CD8-positive, alpha-beta T cell (primary cell): ENCODE measurements at regions of chr15 and their contacts with region 1.

Region 1: DNA sequence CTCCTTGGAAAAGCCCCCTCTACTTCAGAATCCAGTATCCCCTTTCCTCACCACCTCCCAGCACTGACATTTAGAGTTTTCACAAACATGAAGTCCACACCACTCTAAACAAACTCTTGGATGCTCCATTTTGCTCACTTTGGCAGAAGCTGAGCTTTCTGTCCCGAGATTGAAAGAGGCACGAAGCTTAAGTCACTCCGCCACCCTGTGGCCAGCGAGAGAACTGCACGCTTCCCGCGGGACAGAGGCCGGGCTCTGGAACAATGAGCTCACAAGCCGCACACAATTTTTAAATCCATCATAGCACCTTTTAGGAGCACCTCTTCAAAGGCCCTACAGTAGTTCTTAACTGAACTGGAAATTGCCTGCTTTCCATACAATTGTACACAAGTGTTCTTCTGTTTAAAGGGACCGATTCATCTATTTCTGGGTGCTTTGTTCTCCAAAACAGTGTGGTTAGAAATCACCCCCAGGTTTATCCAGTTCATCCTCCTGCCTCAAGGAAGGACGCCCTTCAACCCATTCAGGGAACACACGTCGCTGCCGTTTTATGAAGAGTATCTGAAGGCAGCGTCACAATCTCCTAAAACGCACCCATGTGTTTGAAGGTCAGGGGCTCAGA is 226.1 kb downstream of the VPS13C start:
- DNase-seq: peak; percentile 39 to 78 (median 71)
- ATAC-seq: peak; percentile 85
- H3K4me3 ChIP-seq: no peak overlapping the region
- H3K4me3 Mint-ChIP-seq: no peak overlapping the region
- H3K27ac ChIP-seq: no peak overlapping the region
- H3K27ac Mint-ChIP-seq: no peak overlapping the region
- H3K4me1 ChIP-seq: no peaks in the 10 kb centered on the region
- H3K4me1 Mint-ChIP-seq: peaks cover 8% of the 10 kb centered on the region
- H3K27me3 ChIP-seq: peaks cover 0 to 4% of the 10 kb centered on the region in 2 experiments
- H3K27me3 Mint-ChIP-seq: peaks cover 22% of the 10 kb centered on the region
- CTCF ChIP-seq: peak; percentile 90

Region 2: DNA sequence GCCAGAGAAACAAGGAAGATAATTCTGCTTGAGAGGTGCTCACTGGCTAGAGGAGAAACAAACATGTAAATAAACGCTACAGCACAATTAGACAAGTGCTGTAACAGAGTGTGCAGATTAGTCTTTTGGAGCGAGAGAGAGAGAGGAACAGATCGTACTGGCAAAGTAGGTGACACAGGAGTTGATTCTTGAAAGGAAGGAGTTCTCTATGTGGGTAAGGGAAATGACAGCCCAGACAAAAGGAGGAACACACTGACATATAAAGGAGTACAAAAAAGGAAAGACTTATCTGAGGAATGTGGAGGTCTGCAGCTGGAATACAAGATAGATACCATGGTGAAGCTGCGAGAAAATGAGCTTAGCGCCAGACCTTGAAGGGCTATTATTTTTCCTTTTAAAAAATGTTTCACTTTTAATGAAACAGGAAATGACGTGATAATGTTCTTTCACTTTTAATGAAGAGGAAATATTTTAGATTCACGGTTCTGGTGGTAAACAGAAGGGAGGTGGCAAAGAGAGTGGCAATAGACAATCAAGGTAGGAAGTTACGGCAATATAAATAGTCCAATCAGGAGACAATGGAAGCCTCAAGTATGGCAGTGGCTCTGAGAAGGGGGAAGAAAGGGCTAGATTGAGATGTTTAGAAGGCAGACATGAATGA is 23.1 kb after region 1 on chr15:
- CTCF ChIA-PET with region 1: interaction called, 10 read pairs
- POLR2A ChIA-PET with region 1: no interaction called
- intact Hi-C with region 1: no loop called
- DNase-seq: peak in 2 of 9 experiments; percentile 58 to 82
- ATAC-seq: peak; percentile 94
- H3K4me3 ChIP-seq: peak overlapping the region; percentile 36 to 53
- H3K4me3 Mint-ChIP-seq: no peak overlapping the region
- H3K27ac ChIP-seq: peak overlapping the region; percentile 48 to 89
- H3K27ac Mint-ChIP-seq: no peak overlapping the region
- H3K4me1 ChIP-seq: no peaks in the 10 kb centered on the region
- H3K4me1 Mint-ChIP-seq: peaks cover 4% of the 10 kb centered on the region
- H3K27me3 ChIP-seq: no peaks in the 10 kb centered on the region
- H3K27me3 Mint-ChIP-seq: no peaks in the 10 kb centered on the region
- CTCF ChIP-seq: no peak

Region 3: DNA sequence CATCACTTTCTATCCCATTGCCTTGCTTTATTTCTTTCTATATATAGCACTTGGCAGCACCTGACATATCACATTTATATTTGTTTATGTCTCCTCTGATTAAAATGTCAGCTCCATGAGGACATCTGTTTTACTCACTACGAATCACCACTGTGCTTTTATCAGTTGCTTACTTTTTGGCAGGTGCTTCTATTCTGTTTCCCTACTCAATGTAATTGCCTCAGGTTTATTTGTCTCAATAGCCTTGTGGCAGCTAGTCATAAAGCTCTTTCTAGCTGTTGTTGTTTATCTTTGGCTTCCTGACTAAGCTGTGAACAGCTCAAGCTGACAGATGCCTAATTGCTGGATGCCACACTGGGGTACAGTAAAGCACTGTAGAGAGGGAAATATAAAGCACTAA is 140.6 kb after region 1 on chr15:
- CTCF ChIA-PET with region 1: no interaction called
- POLR2A ChIA-PET with region 1: no interaction called
- intact Hi-C with region 1: no loop called
- DNase-seq: no peak
- ATAC-seq: no peak
- H3K4me3 ChIP-seq: no peak overlapping the region
- H3K4me3 Mint-ChIP-seq: no peak overlapping the region
- H3K27ac ChIP-seq: no peak overlapping the region
- H3K27ac Mint-ChIP-seq: peak overlapping the region; percentile 7
- H3K4me1 ChIP-seq: no peaks in the 10 kb centered on the region
- H3K4me1 Mint-ChIP-seq: peaks cover 14% of the 10 kb centered on the region
- H3K27me3 ChIP-seq: no peaks in the 10 kb centered on the region
- H3K27me3 Mint-ChIP-seq: no peaks in the 10 kb centered on the region
- CTCF ChIP-seq: no peak

Region 4: DNA sequence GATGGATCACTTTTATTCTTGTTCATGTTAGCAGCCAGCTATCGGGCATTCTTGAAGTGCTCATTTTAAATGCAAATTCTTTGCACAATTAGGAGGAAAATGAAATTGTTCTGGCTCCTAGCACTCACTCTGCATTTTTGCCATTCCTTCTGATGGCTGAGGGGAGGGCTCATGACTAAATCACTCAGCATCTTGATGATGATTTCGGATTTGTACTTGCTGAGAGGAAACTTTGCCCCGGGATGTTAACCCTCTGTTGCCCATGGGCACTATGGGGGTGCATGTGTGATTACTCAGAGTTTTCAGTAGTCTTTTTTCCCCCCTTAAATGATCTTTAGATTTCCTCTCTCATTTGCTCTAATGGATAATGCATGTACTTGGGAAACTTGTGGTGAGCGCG is 630.5 kb after region 1 on chr15:
- CTCF ChIA-PET with region 1: no interaction called
- POLR2A ChIA-PET with region 1: no interaction called
- intact Hi-C with region 1: no loop called
- DNase-seq: no peak
- ATAC-seq: no peak
- H3K4me3 ChIP-seq: no peak overlapping the region
- H3K4me3 Mint-ChIP-seq: no peak overlapping the region
- H3K27ac ChIP-seq: no peak overlapping the region
- H3K27ac Mint-ChIP-seq: no peak overlapping the region
- H3K4me1 ChIP-seq: no peaks in the 10 kb centered on the region
- H3K4me1 Mint-ChIP-seq: no peaks in the 10 kb centered on the region
- H3K27me3 ChIP-seq: no peaks in the 10 kb centered on the region
- H3K27me3 Mint-ChIP-seq: peaks cover 5% of the 10 kb centered on the region
- CTCF ChIP-seq: no peak